ENCODE measurements at regions of chr11 and their contacts with region 1.

Region 1: DNA sequence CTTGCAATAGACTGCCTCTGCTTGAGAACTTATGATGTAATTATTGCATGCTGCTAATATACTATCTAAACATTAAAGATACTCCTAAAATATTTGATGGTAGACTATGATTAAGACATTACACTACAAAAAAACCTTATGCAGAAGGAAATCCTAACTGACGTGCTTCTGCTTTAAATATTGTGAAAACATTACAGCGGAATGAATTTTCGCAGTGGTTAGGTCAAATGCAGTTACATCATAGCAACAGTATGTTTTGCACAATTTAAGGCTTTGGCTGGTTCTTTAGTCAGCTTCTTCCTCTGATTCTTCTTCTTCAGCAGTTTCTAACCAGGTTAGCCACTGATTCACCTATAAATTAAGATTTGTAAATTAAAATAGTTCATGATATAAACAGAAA is 11.2 kb downstream of the EIF4G2 start:
- DNase-seq: no peak
- ATAC-seq: no peak
- H3K4me3 ChIP-seq: no peak overlapping the region
- H3K4me3 Mint-ChIP-seq: no peak overlapping the region
- H3K27ac ChIP-seq: no peak overlapping the region
- H3K27ac Mint-ChIP-seq: peak overlapping the region; percentile 45
- H3K4me1 ChIP-seq: peaks cover 43% of the 10 kb centered on the region
- H3K4me1 Mint-ChIP-seq: peaks cover 76% of the 10 kb centered on the region
- H3K27me3 ChIP-seq: no peaks in the 10 kb centered on the region
- H3K27me3 Mint-ChIP-seq: no peaks in the 10 kb centered on the region
- CTCF ChIP-seq: no peak

Region 2: GRCh38 chr11:10762185-10762584 is 35.3 kb before region 1 on chr11:
- CTCF ChIA-PET with region 1: no interaction called
- POLR2A ChIA-PET with region 1: no interaction called
- intact Hi-C with region 1: loop called in 1 of 2 experiments (anchors 5 kb)
- DNase-seq: no peak
- ATAC-seq: no peak
- H3K4me3 ChIP-seq: no peak overlapping the region
- H3K4me3 Mint-ChIP-seq: no peak overlapping the region
- H3K27ac ChIP-seq: no peak overlapping the region
- H3K27ac Mint-ChIP-seq: no peak overlapping the region
- H3K4me1 ChIP-seq: no peaks in the 10 kb centered on the region
- H3K4me1 Mint-ChIP-seq: no peaks in the 10 kb centered on the region
- H3K27me3 ChIP-seq: no peaks in the 10 kb centered on the region
- H3K27me3 Mint-ChIP-seq: no peaks in the 10 kb centered on the region
- CTCF ChIP-seq: no peak

Region 3: DNA sequence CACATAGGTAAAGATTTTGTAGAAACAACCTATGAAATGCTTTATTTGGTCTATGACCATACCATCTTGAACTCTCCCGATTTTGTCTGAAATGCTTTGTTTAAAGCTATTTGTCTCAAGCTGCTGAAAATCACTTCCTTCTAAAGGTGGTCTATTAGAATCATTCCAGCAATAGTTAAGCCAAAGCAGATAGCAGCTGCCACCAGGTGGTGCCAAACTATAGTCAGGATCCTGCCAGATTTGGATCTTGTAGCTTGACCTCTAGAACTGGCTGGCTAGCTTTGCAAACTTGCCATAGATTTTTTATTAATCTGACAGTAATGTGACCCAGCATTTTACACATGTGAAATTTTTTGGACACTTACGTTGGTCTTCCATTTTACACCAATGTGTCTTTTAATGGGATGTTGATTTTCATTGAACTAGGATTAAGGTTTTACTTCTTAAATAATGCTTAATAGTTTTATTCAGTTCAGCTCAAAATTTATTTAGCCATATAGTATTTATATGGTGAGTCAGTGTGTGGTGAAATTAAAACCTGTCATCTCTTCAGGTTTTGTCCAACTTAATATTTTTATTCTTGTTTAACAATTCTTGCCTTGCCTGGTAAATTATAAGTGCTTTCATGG is 26.8 kb before region 1 on chr11:
- CTCF ChIA-PET with region 1: interaction called, 19 read pairs
- POLR2A ChIA-PET with region 1: interaction called, 3 read pairs
- intact Hi-C with region 1: loop called in 1 of 2 experiments (anchors 2 kb)
- DNase-seq: peak in 6 of 14 experiments; percentile 12 to 43 (median 34)
- ATAC-seq: no peak
- H3K4me3 ChIP-seq: no peak overlapping the region
- H3K4me3 Mint-ChIP-seq: no peak overlapping the region
- H3K27ac ChIP-seq: no peak overlapping the region
- H3K27ac Mint-ChIP-seq: no peak overlapping the region
- H3K4me1 ChIP-seq: no peaks in the 10 kb centered on the region
- H3K4me1 Mint-ChIP-seq: no peaks in the 10 kb centered on the region
- H3K27me3 ChIP-seq: no peaks in the 10 kb centered on the region
- H3K27me3 Mint-ChIP-seq: no peaks in the 10 kb centered on the region
- CTCF ChIP-seq: peak; percentile 58

Region 4: DNA sequence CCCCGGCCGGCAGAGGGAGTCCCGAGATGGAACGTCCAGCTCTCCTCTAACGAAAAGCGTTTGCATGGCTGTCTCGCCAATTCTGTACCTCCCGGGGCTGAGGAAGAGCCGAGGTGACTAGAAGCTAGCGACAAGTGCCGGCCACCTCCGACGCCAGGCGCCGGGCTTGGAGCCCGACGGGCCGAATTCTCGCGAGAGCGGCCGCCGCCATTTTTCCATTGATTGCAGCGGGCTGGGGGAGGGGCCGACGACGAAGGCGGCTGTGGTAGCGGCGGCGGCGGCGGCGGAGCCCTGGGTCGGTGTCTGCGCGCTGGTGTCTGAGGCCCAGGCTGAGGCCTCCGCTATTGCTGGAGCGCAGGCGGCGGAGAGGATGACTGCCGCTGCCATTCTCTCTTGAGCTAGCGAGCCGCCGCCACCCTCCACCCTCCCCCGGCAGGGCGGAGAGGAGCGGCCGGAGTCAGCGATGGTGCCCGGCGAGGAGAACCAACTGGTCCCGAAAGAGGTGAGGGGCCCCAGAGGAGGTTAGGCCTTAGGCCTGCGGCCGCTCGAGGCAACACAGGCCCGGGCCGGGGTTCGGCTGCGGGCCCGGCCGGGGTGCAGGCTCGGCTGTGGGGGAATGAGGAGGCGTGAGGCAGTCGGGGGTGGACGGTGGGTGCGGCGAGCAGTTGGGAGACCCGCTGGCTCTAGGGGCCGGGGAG is 1044.3 kb after region 1 on chr11 and contains the start of gene USP47:
- CTCF ChIA-PET with region 1: interaction called, 4 read pairs
- POLR2A ChIA-PET with region 1: interaction called, 4 read pairs
- intact Hi-C with region 1: loop called in 1 of 2 experiments (anchors 5 kb)
- DNase-seq: peak; percentile 92 to 97 (median 94)
- ATAC-seq: peak; percentile 69
- H3K4me3 ChIP-seq: peak within 1 kb of the TSS; percentile 87
- H3K4me3 Mint-ChIP-seq: no peak within 1 kb of the TSS
- H3K27ac ChIP-seq: peak within 1 kb of the TSS; percentile 91 to 99
- H3K27ac Mint-ChIP-seq: no peak within 1 kb of the TSS
- H3K4me1 ChIP-seq: peaks cover 19% of the 10 kb centered on the region
- H3K4me1 Mint-ChIP-seq: peaks cover 3% of the 10 kb centered on the region
- H3K27me3 ChIP-seq: peaks cover 0 to 5% of the 10 kb centered on the region in 2 experiments
- H3K27me3 Mint-ChIP-seq: peaks cover 16% of the 10 kb centered on the region
- CTCF ChIP-seq: peak; percentile 62
- total RNA-seq, gene USP47: 97.0 to 100 TPM

Measured in CD4-positive, alpha-beta T cell (primary cell).